ENCODE measurements at regions of chr1 and their contacts with region 1.

Region 1: GRCh38 chr1:85360730-85361493 is 84.5 kb upstream of the BCL10 start:
- DNase-seq: peak; percentile 28
- H3K4me3 ChIP-seq: no peak overlapping the region
- H3K27ac ChIP-seq: peak overlapping the region; percentile 74
- H3K4me1 ChIP-seq: peaks cover 26% of the 10 kb centered on the region
- H3K27me3 ChIP-seq: no peaks in the 10 kb centered on the region
- CTCF ChIP-seq: no peak
- POLR2A ChIP-seq: no peak

Region 2: GRCh38 chr1:85398391-85399064 is 37.6 kb after region 1 on chr1:
- CTCF ChIA-PET with region 1: interaction called, 4 read pairs
- POLR2A ChIA-PET with region 1: no interaction called
- dilution Hi-C with region 1: no loop called
- intact Hi-C with region 1: loop called (anchors 5 kb)
- DNase-seq: peak; percentile 49
- H3K4me3 ChIP-seq: no peak overlapping the region
- H3K27ac ChIP-seq: no peak overlapping the region
- H3K4me1 ChIP-seq: peaks cover 6% of the 10 kb centered on the region
- H3K27me3 ChIP-seq: no peaks in the 10 kb centered on the region
- CTCF ChIP-seq: peak in 1 of 2 donors; percentile 29
- POLR2A ChIP-seq: no peak